A549 (cell line): ENCODE measurements at regions of chr12 and their contacts with region 1.

Region 1: DNA sequence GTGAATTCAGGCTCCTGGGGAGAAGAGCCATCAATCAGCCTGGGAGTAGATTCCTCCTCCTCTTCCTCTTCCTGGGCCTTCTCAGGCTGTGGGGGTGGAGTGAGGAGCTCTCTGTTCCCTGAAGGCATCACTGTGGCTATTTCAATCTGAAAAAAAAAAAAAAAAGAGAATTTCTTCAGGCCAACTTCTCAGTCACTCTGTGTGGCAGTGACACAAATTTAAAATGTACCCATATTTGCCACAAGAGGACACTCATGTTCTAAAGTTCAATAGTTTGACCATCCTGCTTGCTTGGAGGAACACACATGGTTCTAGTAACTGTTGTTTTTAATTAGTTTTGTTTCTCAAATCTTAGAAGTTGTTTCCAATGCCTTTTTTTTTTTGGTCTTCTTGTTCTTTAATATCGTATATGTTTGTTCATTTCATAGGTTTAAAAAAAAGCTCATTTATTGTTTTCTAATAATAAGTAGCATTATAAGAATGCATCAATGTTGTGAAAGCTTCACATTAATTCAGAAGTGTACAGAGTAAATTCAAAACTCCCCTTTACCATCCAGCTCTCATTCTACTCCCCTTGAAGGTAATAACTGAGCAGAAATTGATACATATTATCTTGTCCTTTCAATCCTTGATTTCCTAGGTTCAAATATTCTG is 23.3 kb upstream of the CCER1 start:
- DNase-seq: peak; percentile 28 to 66
- ATAC-seq: peak; percentile 78 to 91; a peak in 5 of 6 replicates
- H3K4me3 ChIP-seq: no peak overlapping the region
- H3K27ac ChIP-seq: no peak overlapping the region
- H3K4me1 ChIP-seq: peaks cover 9% of the 10 kb centered on the region
- CTCF ChIP-seq: peak; percentile 83
- EP300 ChIP-seq: no peak
- POLR2A ChIP-seq: no peak
- RAD21 ChIP-seq: peak; percentile 80 to 86

Region 2: GRCh38 chr12:90999966-91000365 is 21.7 kb after region 1 on chr12:
- CTCF ChIA-PET with region 1: no interaction called
- POLR2A ChIA-PET with region 1: no interaction called
- DNase-seq: no peak
- ATAC-seq: no peak
- H3K4me3 ChIP-seq: no peak overlapping the region
- H3K27ac ChIP-seq: no peak overlapping the region
- H3K4me1 ChIP-seq: no peaks in the 10 kb centered on the region
- CTCF ChIP-seq: no peak
- EP300 ChIP-seq: no peak
- POLR2A ChIP-seq: no peak
- RAD21 ChIP-seq: no peak

Region 3: GRCh38 chr12:91326058-91327027 is 348.1 kb after region 1 on chr12:
- CTCF ChIA-PET with region 1: interaction called, 20 read pairs
- POLR2A ChIA-PET with region 1: no interaction called
- DNase-seq: peak; percentile 24 to 33
- ATAC-seq: peak in 1 of 2 experiments; percentile 68; a peak in 2 of 6 replicates
- H3K4me3 ChIP-seq: no peak overlapping the region
- H3K27ac ChIP-seq: no peak overlapping the region
- H3K4me1 ChIP-seq: no peaks in the 10 kb centered on the region
- CTCF ChIP-seq: peak; percentile 73
- EP300 ChIP-seq: no peak
- POLR2A ChIP-seq: no peak
- RAD21 ChIP-seq: peak; percentile 51 to 57

Region 4: DNA sequence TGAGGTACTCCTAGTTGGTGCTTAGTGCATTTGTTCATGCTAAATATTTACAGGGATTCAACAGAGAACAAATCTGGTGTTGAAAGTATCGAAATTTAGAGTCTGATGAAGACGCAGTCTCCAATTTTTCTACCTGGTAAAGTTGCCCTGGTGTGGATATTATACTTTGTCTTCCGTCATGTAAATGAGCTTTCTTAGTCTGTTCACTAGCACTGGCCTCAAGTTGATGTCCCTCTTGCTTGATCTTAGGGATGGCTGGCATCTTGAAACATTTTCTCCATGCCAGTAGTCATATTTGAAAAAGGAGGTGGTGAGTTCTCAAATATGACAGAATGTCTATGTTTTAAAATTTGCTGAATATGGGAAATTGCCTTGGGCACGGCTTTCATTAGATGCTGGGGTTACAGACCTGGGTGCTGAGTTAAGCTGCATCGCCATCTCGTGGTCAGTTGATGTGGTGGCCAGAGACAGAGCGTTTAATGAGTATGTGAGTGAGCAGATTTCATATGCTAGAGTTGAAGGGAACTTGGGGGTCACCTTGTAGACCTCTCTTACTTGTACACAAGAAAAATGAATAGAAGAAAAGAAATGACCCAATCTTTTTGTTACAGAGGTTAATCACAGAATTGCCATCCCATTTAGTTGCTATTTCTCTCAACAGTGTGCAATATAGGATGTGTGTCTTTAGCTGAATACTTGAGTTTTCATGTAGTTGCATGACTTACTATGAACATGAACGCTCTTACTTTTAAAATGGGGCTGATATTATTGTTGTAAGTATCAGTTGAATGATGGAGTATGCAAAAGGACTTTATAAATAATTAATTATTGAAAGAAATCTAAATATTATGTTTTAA is 377.1 kb after region 1 on chr12:
- CTCF ChIA-PET with region 1: interaction called, 19 read pairs
- POLR2A ChIA-PET with region 1: no interaction called
- DNase-seq: peak; percentile 50 to 71
- ATAC-seq: peak; percentile 95 to 99
- H3K4me3 ChIP-seq: no peak overlapping the region
- H3K27ac ChIP-seq: no peak overlapping the region
- H3K4me1 ChIP-seq: no peaks in the 10 kb centered on the region
- CTCF ChIP-seq: peak; percentile 79
- EP300 ChIP-seq: no peak
- POLR2A ChIP-seq: no peak
- RAD21 ChIP-seq: peak; percentile 80 to 89